ENCODE measurements at regions of chr20 and their contacts with region 1.

Region 1: GRCh38 chr20:20664795-20665589 is 47.5 kb downstream of the RALGAPA2 start:
- DNase-seq: peak in 1 of 6 donors; percentile 32
- ATAC-seq: peak; percentile 82 to 96 (median 92)
- H3K4me3 ChIP-seq: no peak overlapping the region
- H3K27ac ChIP-seq: no peak overlapping the region
- H3K4me1 ChIP-seq: peaks cover 0 to 9% (median 5%) of the 10 kb centered on the region in 3 donors
- H3K27me3 ChIP-seq: no peaks in the 10 kb centered on the region
- CTCF ChIP-seq: peak in 3 of 4 donors; percentile 18 to 41 (median 24)

Region 2: DNA sequence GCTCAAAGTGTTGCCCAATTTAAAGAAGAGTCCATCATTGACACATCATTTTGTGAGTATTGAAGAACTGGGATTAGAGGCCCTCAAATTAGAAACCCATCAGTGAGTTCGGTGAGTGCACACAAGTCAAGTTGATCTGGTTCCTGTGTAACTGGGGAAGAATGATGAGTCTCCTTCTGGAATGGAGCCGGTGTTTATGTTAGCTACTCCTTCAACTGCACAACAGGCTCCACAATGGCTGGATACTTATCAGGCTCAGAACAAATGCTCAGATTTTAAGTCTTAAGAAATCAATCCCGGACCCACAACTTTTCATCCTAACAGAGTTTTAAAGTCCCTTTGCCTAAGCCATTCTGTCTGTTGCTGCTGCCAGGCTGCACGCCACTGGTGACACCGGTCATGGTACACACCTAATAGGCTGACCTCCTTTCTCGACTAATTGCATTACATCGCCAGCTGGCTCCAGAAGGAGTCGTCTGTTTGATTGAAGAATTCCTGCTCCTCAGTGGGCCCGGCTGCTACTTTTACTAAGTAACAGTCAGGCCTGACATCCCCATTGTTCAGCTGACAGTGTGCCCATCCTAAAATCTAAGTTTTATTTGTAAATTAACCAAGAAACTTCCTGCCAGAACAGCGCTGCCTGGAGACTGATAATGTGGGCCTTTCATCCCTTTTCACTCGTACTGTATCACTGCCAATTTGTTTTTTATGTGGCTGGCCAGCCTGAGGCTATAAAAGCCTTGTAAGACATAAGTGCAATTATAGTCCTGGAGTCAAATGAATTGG is 166.7 kb before region 1 on chr20:
- intact Hi-C with region 1: no loop called
- DNase-seq: no peak
- ATAC-seq: peak in 2 of 4 donors; percentile 32 to 35
- H3K4me3 ChIP-seq: no peak overlapping the region
- H3K27ac ChIP-seq: no peak overlapping the region
- H3K4me1 ChIP-seq: peaks cover 0 to 3% (median 0%) of the 10 kb centered on the region in 3 donors
- H3K27me3 ChIP-seq: no peaks in the 10 kb centered on the region
- CTCF ChIP-seq: no peak

Region 3: DNA sequence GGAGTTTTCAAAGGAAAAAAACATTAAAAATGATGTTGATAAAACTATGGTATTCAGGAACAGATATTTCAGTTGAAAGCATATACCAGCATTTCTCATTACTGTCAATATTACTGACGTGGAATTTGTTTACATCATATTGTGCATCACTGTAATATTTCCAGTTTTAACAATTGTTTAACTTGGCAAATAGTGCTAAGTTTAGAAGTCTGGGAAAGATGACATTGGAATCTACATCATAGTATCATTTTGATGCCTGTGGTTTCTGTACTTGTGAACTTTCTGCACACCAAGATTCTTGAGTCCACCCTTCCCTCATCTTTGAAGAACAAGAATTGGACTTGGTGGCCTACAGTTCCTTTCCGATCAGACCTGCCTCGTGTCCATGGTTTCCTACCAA is 50.6 kb before region 1 on chr20:
- intact Hi-C with region 1: no loop called
- DNase-seq: no peak
- ATAC-seq: no peak
- H3K4me3 ChIP-seq: no peak overlapping the region
- H3K27ac ChIP-seq: no peak overlapping the region
- H3K4me1 ChIP-seq: no peaks in the 10 kb centered on the region
- H3K27me3 ChIP-seq: no peaks in the 10 kb centered on the region
- CTCF ChIP-seq: no peak

Region 4: GRCh38 chr20:20721369-20721888 is 56.4 kb after region 1 on chr20:
- intact Hi-C with region 1: no loop called
- DNase-seq: no peak
- ATAC-seq: no peak
- H3K4me3 ChIP-seq: no peak overlapping the region
- H3K27ac ChIP-seq: no peak overlapping the region
- H3K4me1 ChIP-seq: no peaks in the 10 kb centered on the region
- H3K27me3 ChIP-seq: no peaks in the 10 kb centered on the region
- CTCF ChIP-seq: no peak

Region 5: GRCh38 chr20:20824924-20825584 is 160.1 kb after region 1 on chr20:
- intact Hi-C with region 1: loop called (anchors 5 to 10 kb)
- DNase-seq: peak; percentile 37 to 82 (median 64)
- ATAC-seq: peak; percentile 79 to 86 (median 86)
- H3K4me3 ChIP-seq: no peak overlapping the region
- H3K27ac ChIP-seq: no peak overlapping the region
- H3K4me1 ChIP-seq: no peaks in the 10 kb centered on the region
- H3K27me3 ChIP-seq: no peaks in the 10 kb centered on the region
- CTCF ChIP-seq: peak; percentile 59 to 77 (median 66)